ENCODE measurements at regions of chr17 and their contacts with region 1.

Region 1: GRCh38 chr17:68435876-68436842 is 21.1 kb downstream of the WIPI1 start:
- DNase-seq: peak; percentile 71
- H3K4me3 ChIP-seq: no peak overlapping the region
- CTCF ChIP-seq: peak; percentile 96

Region 2: DNA sequence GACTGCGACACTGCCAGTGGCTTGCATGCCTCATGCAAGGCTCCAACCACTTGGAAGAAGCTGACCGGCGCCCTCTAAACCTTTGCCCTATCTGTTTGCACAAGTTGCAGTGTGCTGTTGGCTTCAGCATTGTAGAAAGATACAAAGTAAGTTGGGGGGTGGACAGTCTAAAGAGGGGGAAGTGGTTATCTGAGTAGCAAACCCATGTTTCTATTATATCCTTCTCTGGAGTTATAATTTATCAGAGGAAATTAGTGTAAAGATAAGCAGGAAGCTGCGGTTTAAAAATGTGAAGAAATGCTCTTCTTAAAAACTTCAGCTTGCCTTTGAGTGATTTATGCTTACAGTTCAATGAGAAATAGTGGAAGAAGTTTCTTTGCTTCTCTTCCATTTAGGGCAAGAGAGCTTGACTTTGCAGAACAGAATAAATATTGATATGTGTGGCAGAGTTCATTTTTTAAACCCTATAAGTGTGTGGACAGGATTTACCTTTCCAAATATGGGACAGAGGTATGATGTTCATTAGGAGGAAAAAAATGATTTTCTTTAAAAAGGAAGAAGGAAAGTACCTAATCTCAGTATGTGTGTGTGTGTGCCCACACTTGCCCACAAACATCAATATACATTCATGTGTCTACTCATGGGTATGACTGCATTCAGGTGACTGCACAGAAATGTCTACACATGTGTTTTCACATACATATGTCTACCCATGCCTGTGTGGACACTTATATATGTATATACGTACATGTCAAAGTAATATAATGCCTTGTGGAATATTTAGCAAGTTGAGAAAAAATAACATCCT is 180.2 kb before region 1 on chr17:
- in situ Hi-C with region 1: loop called (anchors 25 kb)
- DNase-seq: no peak
- H3K4me3 ChIP-seq: no peak overlapping the region
- CTCF ChIP-seq: no peak

Region 3: GRCh38 chr17:68491381-68492231 is 55.4 kb after region 1 on chr17:
- in situ Hi-C with region 1: no loop called
- DNase-seq: no peak
- H3K4me3 ChIP-seq: no peak overlapping the region
- CTCF ChIP-seq: no peak

Measured in astrocyte of the cerebellum (primary cell).